ENCODE measurements at regions of chr19 and their contacts with region 1.

Region 1: GRCh38 chr19:13002166-13002898 is 7.1 kb downstream of the NFIX start:
- DNase-seq: peak; percentile 87 to 95 (median 92)
- H3K4me3 ChIP-seq: peak overlapping the region; percentile 7 to 65 (median 43)
- H3K27ac ChIP-seq: peak overlapping the region; percentile 93 to 100 (median 98)
- H3K27me3 ChIP-seq: no peaks in the 10 kb centered on the region
- CTCF ChIP-seq: peak in 48 of 56 donors; percentile 19 to 62 (median 42)

Region 2: DNA sequence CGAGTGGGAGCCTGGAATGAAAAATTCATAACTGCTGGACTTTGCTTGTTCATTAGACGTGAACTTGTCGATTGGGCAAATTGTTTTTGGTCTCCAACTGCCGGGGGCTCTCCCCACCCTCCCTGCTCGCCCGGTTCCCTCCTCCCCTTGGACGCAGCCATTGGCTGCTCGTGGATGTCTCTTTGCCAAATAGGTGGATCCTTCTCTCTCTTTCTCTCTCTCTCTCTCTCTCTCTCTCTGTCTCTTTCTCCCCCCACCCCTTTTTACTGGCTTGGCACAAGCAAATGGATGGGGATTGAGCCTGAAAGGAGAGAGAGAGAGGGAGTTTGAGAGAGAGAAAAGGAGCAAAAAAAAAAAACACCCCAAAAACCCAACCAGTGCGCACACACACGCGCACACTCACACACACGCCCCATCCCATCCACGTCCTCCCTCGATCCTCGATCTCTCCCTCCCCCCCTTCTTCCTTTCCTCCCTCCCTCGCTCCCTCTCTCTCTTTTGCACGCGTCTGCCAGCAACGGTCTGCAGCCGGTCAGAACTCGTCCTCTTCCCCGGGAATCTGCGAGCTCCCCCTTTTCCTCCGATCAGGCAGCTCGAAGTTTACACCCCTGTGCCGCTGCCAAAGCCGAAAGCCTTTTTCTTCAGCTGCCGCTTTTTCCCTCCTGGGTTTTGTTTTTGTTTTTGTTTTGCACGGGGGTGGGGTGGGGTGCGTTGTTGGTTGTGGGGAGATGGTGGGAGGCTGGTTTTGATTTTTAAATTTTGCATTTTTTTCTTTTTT is 20.7 kb after region 1 on chr19:
- intact Hi-C with region 1: loop called in 1 of 2 experiments (anchors 1 kb)
- DNase-seq: peak; percentile 71 to 90 (median 87)
- H3K4me3 ChIP-seq: peak overlapping the region; percentile 41 to 83 (median 67)
- H3K27ac ChIP-seq: peak overlapping the region; percentile 85 to 100 (median 99)
- H3K27me3 ChIP-seq: no peaks in the 10 kb centered on the region
- CTCF ChIP-seq: peak in 4 of 56 donors; percentile 3 to 15 (median 9)

Region 3: DNA sequence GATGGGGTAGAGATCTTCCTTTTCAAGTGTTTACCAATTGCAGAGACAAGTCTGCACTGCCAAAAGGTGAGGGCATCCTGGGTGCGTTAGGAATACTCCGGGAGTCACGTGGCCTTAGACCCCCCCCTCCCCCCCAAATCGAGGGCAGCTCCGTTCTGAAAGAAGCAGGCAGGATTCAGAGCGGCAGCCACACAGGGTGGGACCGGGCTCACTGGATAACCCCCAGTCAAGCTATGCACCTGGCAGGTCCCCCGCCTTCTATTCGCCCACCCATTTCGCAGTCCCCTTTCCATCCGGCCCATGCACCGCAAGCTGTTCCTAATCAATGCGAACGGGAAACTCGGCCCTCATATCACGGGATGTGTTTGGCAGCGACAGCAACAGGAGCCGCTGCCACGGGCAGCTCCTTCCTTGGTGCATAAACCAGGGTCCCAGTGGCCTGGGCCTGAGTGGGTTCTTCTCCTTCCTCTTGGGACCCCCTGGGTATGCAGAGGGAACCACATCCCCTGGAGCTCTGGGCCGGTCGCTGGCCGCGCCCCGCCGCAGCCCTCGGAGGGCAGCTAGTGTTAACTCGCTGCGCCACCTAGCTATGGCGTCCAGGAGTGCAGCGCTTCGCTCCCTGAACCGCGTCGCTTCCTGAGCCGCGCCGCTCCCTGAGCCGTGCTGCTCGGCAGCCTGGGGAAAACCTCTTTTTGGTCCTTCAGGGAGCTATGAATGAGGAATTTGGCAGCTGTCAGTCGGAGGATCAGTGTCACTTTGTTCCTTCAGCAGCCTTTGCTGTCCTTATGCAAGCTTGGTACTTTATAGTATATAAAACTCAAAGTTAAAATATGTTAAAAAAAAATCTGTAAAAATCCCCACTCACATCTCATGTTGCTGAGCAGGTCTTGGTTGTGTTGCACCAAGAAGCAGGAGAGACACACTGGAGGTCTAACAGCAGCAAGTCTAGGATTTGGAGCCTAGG is 58.9 kb after region 1 on chr19:
- intact Hi-C with region 1: loop called in 1 of 2 experiments (anchors 1 kb)
- DNase-seq: peak; percentile 80 to 92 (median 88)
- H3K4me3 ChIP-seq: peak overlapping the region; percentile 24 to 69 (median 55)
- H3K27ac ChIP-seq: peak overlapping the region; percentile 67 to 100 (median 98)
- H3K27me3 ChIP-seq: no peaks in the 10 kb centered on the region
- CTCF ChIP-seq: peak; percentile 91 to 99 (median 97)

Measured in dorsolateral prefrontal cortex (tissue), 120 donors.